Activated CD4-positive, alpha-beta T cell treated with anti-CD3 and anti-CD28 coated beads, Interleukin-2, amount 10 ng/mL, durations not matched to agents 24 days and 14 days (primary cell): ENCODE measurements at regions of chr19 and their contacts with region 1.

Region 1: GRCh38 chr19:41746593-41747227 is 8.6 kb upstream of the CEACAM6 start:
- DNase-seq: peak; percentile 83
- H3K4me3 Mint-ChIP-seq: no peak overlapping the region
- H3K27ac Mint-ChIP-seq: no peak overlapping the region
- H3K4me1 Mint-ChIP-seq: peaks cover 1% of the 10 kb centered on the region
- H3K27me3 Mint-ChIP-seq: peaks cover 66% of the 10 kb centered on the region

Region 2: GRCh38 chr19:41641879-41642485 is 104.7 kb before region 1 on chr19:
- intact Hi-C with region 1: loop called (anchors 5 kb)
- DNase-seq: peak; percentile 90
- H3K4me3 Mint-ChIP-seq: no peak overlapping the region
- H3K27ac Mint-ChIP-seq: no peak overlapping the region
- H3K4me1 Mint-ChIP-seq: no peaks in the 10 kb centered on the region
- H3K27me3 Mint-ChIP-seq: peaks cover 5% of the 10 kb centered on the region

Region 3: DNA sequence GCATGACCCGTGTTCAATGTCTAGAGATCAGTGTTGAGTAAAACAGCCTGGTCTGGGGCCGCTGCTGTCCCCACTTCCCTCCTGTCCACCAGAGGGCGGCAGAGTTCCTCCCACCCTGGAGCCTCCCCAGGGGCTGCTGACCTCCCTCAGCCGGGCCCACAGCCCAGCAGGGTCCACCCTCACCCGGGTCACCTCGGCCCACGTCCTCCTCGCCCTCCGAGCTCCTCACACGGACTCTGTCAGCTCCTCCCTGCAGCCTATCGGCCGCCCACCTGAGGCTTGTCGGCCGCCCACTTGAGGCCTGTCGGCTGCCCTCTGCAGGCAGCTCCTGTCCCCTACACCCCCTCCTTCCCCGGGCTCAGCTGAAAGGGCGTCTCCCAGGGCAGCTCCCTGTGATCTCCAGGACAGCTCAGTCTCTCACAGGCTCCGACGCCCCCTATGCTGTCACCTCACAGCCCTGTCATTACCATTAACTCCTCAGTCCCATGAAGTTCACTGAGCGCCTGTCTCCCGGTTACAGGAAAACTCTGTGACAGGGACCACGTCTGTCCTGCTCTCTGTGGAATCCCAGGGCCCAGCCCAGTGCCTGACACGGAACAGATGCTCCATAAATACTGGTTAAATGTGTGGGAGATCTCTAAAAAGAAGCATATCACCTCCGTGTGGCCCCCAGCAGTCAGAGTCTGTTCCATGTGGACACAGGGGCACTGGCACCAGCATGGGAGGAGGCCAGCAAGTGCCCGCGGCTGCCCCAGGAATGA is 39.8 kb before region 1 on chr19:
- intact Hi-C with region 1: loop called (anchors 1 kb)
- DNase-seq: peak; percentile 89
- H3K4me3 Mint-ChIP-seq: peak overlapping the region; percentile 68
- H3K27ac Mint-ChIP-seq: no peak overlapping the region
- H3K4me1 Mint-ChIP-seq: peaks cover 5% of the 10 kb centered on the region
- H3K27me3 Mint-ChIP-seq: peaks cover 17% of the 10 kb centered on the region

Region 4: DNA sequence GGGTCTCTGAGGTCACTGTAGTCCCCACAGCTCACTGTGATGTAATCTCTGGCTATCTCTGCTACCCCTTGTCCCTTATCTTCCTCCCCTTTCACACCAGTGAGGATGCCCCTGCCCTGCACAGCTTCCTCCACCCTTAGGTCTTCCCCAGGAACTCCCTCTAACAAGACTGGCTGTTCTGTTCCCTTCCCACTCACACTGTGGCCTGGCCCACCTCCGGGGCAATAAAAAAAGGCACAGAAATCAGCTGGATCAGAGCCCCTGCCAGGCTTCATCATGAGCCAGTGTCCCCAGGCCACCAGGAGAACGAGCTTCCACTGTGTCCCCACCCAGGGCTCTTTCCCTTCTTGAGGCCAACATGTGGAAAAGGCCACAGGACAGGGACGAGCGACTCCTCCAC is 54.3 kb after region 1 on chr19:
- intact Hi-C with region 1: no loop called
- DNase-seq: no peak
- H3K4me3 Mint-ChIP-seq: no peak overlapping the region
- H3K27ac Mint-ChIP-seq: no peak overlapping the region
- H3K4me1 Mint-ChIP-seq: peaks cover 27% of the 10 kb centered on the region
- H3K27me3 Mint-ChIP-seq: peaks cover 12% of the 10 kb centered on the region

Region 5: DNA sequence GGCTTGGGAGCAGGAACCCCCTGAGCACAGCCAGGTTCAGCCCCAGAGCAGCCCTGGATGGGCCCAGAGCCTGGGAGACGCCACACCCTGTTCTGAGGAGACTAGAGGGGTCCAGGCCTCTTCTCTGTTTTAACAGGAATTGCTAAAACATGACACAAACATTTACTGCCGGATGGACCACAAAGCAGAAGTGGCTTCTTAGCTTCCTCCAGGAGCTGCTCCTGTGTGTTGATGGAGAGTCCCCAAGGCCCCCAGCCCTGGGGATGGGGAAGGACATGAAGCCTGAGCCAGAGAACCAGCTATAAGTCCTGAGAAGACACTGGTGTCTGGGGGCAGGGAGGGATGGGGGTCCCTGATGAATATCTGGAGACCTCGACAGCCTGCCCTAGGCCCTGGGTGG is 64.3 kb after region 1 on chr19:
- intact Hi-C with region 1: no loop called
- DNase-seq: no peak
- H3K4me3 Mint-ChIP-seq: no peak overlapping the region
- H3K27ac Mint-ChIP-seq: no peak overlapping the region
- H3K4me1 Mint-ChIP-seq: peaks cover 8% of the 10 kb centered on the region
- H3K27me3 Mint-ChIP-seq: no peaks in the 10 kb centered on the region